Panc1 (cell line): ENCODE measurements at regions of chr12 and their contacts with region 1.

Region 1: GRCh38 chr12:108722992-108723766 is 8.1 kb downstream of the CORO1C start:
- DNase-seq: no peak
- ATAC-seq: peak; percentile 44; the same call in 1 of the 2 replicates
- H3K4me3 ChIP-seq: peak overlapping the region in 1 of 2 experiments; percentile 15; a peak in 1 of 4 replicates
- H3K27ac ChIP-seq: peak overlapping the region; percentile 76
- H3K4me1 ChIP-seq: peaks cover 58% of the 10 kb centered on the region
- H3K27me3 ChIP-seq: no peaks in the 10 kb centered on the region
- CTCF ChIP-seq: no peak

Region 2: GRCh38 chr12:108664338-108665258 is 58.6 kb before region 1 on chr12:
- CTCF ChIA-PET with region 1: no interaction called
- POLR2A ChIA-PET with region 1: no interaction called
- in situ Hi-C with region 1: no loop called
- intact Hi-C with region 1: loop called (anchors 10 kb)
- DNase-seq: peak; percentile 89
- ATAC-seq: peak; percentile 95
- H3K4me3 ChIP-seq: no peak overlapping the region
- H3K27ac ChIP-seq: peak overlapping the region; percentile 75
- H3K4me1 ChIP-seq: peaks cover 17% of the 10 kb centered on the region
- H3K27me3 ChIP-seq: no peaks in the 10 kb centered on the region
- CTCF ChIP-seq: peak; percentile 95

Region 3: DNA sequence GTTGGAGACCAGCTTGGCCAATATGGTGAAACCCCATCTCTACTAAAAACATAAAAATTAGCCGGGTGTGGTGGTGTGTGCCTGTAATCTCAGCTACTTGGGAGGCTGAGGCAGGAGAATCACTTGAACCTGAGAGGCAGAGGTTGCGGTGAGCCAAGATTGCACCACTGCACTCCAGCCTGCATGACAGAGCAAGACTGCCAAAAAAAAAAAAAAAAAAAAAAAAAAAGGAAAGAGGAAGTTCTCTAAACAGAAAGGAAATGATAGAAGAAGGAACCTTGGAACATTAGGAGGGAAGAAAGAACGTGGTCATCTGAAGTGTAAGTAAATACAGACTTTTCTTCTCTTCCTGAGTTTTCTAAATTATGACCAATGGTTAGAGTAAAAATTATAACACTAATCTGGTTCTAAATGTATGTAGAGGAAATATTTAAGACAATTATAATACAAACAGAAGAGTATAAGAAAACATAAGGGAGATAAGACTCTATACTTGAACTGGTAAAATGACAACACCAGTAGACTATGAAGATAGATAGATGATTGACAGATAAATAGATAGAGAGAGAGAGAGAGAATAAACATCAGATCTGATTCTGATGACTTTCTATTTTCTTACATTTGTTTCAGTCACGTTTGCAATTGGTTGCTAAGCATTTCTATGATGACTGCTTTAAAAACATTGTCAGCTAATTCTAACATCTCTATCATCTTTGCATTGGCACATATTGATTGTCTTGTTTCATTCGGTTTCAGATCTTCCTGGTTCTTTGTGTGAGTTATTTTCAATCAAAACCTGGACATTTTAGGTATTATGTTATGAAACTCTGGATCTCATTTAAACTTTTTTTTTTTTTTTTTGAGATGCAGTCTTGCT is 21.1 kb after region 1 on chr12:
- CTCF ChIA-PET with region 1: interaction called, 10 read pairs
- POLR2A ChIA-PET with region 1: no interaction called
- in situ Hi-C with region 1: no loop called
- intact Hi-C with region 1: no loop called
- DNase-seq: no peak
- ATAC-seq: no peak
- H3K4me3 ChIP-seq: no peak overlapping the region
- H3K27ac ChIP-seq: no peak overlapping the region
- H3K4me1 ChIP-seq: no peaks in the 10 kb centered on the region
- H3K27me3 ChIP-seq: no peaks in the 10 kb centered on the region
- CTCF ChIP-seq: no peak